ENCODE measurements at regions of chr12 and their contacts with region 1.

Region 1: GRCh38 chr12:111691262-111691661 is 5.4 kb downstream of the ACAD10 start:
- DNase-seq: no peak
- ATAC-seq: no peak
- H3K4me3 ChIP-seq: no peak overlapping the region
- H3K27ac ChIP-seq: no peak overlapping the region
- H3K4me1 ChIP-seq: peaks cover 10% of the 10 kb centered on the region; the same call in 1 of the 2 replicates
- H3K27me3 ChIP-seq: no peaks in the 10 kb centered on the region
- CTCF ChIP-seq: no peak

Region 2: GRCh38 chr12:111569363-111570083 is 121.7 kb before region 1 on chr12:
- CTCF ChIA-PET with region 1: no interaction called
- POLR2A ChIA-PET with region 1: no interaction called
- in situ Hi-C with region 1: no loop called
- intact Hi-C with region 1: no loop called
- DNase-seq: no peak
- ATAC-seq: peak; percentile 43
- H3K4me3 ChIP-seq: no peak overlapping the region
- H3K27ac ChIP-seq: peak overlapping the region; percentile 72
- H3K4me1 ChIP-seq: peaks cover 31% of the 10 kb centered on the region
- H3K27me3 ChIP-seq: no peaks in the 10 kb centered on the region
- CTCF ChIP-seq: no peak

Region 3: GRCh38 chr12:111673503-111673902 is 17.8 kb before region 1 on chr12:
- CTCF ChIA-PET with region 1: no interaction called
- POLR2A ChIA-PET with region 1: no interaction called
- in situ Hi-C with region 1: no loop called
- intact Hi-C with region 1: no loop called
- DNase-seq: no peak
- ATAC-seq: peak; percentile 76
- H3K4me3 ChIP-seq: no peak overlapping the region
- H3K27ac ChIP-seq: no peak overlapping the region
- H3K4me1 ChIP-seq: no peaks in the 10 kb centered on the region
- H3K27me3 ChIP-seq: no peaks in the 10 kb centered on the region
- CTCF ChIP-seq: peak; percentile 74

Region 4: GRCh38 chr12:111753144-111753881 is 62.1 kb after region 1 on chr12:
- CTCF ChIA-PET with region 1: no interaction called
- POLR2A ChIA-PET with region 1: interaction called, 13 read pairs
- in situ Hi-C with region 1: no loop called
- intact Hi-C with region 1: no loop called
- DNase-seq: no peak
- ATAC-seq: peak; percentile 94
- H3K4me3 ChIP-seq: no peak overlapping the region
- H3K27ac ChIP-seq: no peak overlapping the region
- H3K4me1 ChIP-seq: no peaks in the 10 kb centered on the region
- H3K27me3 ChIP-seq: no peaks in the 10 kb centered on the region
- CTCF ChIP-seq: peak; percentile 90; the same call in 1 of the 2 replicates